ENCODE measurements at regions of chr2 and their contacts with region 1.

Region 1: DNA sequence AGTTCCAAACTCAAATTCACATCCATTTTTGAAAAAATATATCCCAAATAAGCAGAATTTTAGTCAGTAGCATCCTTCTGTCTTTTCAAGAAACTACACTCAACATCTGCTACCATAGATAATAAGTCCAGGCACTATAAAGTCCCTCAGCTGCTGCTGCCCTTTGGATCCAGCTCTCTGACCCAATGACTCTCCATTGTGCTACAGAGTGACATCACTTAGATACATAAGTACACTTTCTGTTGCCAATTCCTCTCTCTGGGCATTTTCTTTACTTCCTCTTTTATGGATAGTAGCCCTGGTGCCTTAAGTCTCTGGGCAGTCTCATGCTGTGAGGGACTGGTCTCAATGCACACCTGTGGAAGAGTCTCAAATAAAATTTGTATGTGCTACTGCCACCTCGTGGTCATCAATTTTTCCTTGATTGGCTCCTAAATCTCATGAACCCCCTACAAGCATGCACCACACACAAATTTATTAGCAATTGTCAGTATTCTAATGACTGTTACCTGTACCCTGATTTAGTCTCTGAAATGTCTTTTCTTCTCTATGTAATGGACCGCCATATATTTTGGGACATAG is 219.2 kb downstream of the LRP1B start:
- DNase-seq: peak; percentile 56
- H3K4me3 Mint-ChIP-seq: no peak overlapping the region
- H3K27ac Mint-ChIP-seq: no peak overlapping the region
- H3K4me1 Mint-ChIP-seq: no peaks in the 10 kb centered on the region
- H3K27me3 Mint-ChIP-seq: peaks cover 53% of the 10 kb centered on the region
- CTCF ChIP-seq: peak; percentile 44

Region 2: DNA sequence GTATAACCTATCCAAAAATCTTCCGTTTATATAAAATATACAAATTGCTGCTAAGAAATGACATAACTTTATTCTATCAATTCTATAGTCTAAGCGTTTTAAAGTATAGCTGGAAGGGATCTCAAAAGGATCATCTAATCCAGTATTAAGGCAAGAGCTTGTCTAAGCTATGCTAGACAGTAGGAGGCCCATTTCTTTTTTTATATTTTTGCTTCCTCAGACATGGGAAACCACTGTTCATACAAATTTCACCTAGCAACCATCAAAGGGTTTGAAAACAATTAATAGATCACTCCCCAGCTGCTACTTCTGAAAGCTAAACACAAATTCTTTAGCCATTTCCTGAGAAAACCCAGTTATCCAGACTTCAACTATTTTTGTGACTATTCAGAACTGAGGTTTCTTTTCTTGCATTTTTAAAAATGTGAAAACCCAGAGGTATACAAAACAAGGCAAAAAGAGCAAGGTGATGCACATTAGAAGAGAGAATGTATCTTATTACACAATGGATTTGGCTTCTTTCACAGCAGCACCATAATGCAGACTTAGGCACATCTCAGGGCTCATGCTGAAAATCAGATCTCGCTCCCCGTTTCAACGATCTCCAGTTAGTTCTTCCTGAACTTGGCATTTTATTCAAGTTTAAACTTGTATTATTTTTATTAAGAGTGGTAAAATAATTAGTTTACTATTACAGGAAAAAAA is 55.2 kb before region 1 on chr2:
- CTCF ChIA-PET with region 1: no interaction called
- POLR2A ChIA-PET with region 1: no interaction called
- intact Hi-C with region 1: no loop called
- DNase-seq: no peak
- H3K4me3 Mint-ChIP-seq: no peak overlapping the region
- H3K27ac Mint-ChIP-seq: no peak overlapping the region
- H3K4me1 Mint-ChIP-seq: no peaks in the 10 kb centered on the region
- H3K27me3 Mint-ChIP-seq: peaks cover 72% of the 10 kb centered on the region
- CTCF ChIP-seq: no peak

Region 3: DNA sequence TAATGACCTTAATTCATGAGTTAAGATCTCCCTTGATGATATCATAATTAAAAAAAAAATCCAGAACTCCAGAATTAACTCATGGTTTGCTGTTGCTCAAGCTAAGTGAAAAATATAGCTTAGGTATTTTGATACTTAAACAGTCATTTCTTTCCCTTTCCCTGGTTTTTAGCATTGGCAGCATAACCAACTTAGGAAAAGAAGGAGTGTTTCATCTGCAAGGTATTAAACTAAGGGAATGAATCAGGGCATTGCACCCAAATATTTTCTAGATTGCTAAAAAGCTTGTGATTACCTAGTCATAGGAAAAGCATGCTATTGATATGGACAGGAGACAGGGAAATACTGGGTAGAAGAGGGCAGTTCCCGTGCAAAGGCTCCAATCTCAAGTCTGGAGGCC is 12.1 kb after region 1 on chr2:
- CTCF ChIA-PET with region 1: interaction called, 18 read pairs
- POLR2A ChIA-PET with region 1: no interaction called
- intact Hi-C with region 1: no loop called
- DNase-seq: no peak
- H3K4me3 Mint-ChIP-seq: no peak overlapping the region
- H3K27ac Mint-ChIP-seq: no peak overlapping the region
- H3K4me1 Mint-ChIP-seq: no peaks in the 10 kb centered on the region
- H3K27me3 Mint-ChIP-seq: peaks cover 44% of the 10 kb centered on the region
- CTCF ChIP-seq: no peak

Region 4: DNA sequence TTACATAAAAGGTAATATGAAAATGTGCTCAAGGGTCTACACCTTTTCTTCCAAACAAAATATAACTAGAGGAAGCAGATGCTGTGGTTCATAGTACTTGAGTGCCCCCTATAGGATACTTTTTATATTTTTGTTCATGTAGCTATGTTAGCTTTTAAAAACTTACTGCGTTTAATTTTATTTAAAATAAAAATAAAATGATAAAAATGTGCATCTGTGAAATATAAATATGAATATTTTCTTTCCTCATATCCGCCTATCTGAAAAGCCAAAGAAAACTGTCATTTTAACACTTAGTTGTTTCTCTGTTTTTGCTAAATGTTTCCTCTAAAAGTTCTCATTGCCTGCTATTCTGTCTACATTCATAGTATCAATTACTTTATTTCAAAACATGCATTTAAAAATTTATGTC is 228.9 kb after region 1 on chr2:
- CTCF ChIA-PET with region 1: no interaction called
- POLR2A ChIA-PET with region 1: no interaction called
- intact Hi-C with region 1: loop called (anchors 10 kb)
- DNase-seq: peak; percentile 27
- H3K4me3 Mint-ChIP-seq: no peak overlapping the region
- H3K27ac Mint-ChIP-seq: no peak overlapping the region
- H3K4me1 Mint-ChIP-seq: no peaks in the 10 kb centered on the region
- H3K27me3 Mint-ChIP-seq: peaks cover 86% of the 10 kb centered on the region
- CTCF ChIP-seq: peak; percentile 68

Measured in MCF 10A (cell line).